PC-3 (cell line): ENCODE measurements at regions of chr14 and their contacts with region 1.

Region 1: DNA sequence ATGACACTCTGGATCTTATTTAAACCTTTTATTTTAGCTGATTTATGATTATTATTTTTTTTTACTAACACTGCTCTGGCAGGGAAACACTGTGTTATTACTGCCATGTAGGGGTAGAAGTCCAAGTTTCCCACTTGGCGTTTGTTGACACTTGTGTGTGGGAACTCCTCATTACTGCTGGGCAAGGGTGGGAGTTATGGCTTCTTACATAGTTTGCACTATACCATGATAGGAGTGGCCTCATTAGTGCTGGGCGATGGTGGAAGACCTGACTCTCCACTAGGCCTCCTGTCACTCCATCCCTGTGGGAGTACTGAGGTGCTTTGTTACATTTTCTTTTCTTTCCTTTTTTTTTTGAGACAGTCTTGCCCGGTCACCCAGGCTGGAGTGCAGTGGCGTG is 83.5 kb downstream of the BRMS1L start:
- DNase-seq: no peak
- ATAC-seq: no peak
- H3K4me3 ChIP-seq: no peak overlapping the region
- H3K27ac ChIP-seq: no peak overlapping the region
- H3K4me1 ChIP-seq: no peaks in the 10 kb centered on the region
- H3K27me3 ChIP-seq: peaks cover 46% of the 10 kb centered on the region
- CTCF ChIP-seq: no peak

Region 2: GRCh38 chr14:35959835-35960234 is 50.2 kb after region 1 on chr14:
- CTCF ChIA-PET with region 1: no interaction called
- POLR2A ChIA-PET with region 1: interaction called, 11 read pairs
- intact Hi-C with region 1: no loop called
- DNase-seq: peak; percentile 22
- ATAC-seq: no peak; the same call in 1 of the 2 replicates
- H3K4me3 ChIP-seq: no peak overlapping the region
- H3K27ac ChIP-seq: no peak overlapping the region
- H3K4me1 ChIP-seq: no peaks in the 10 kb centered on the region
- H3K27me3 ChIP-seq: peaks cover 38% of the 10 kb centered on the region
- CTCF ChIP-seq: peak; percentile 42; the same call in 1 of the 2 replicates

Region 3: GRCh38 chr14:35979531-35979930 is 69.9 kb after region 1 on chr14:
- CTCF ChIA-PET with region 1: no interaction called
- POLR2A ChIA-PET with region 1: no interaction called
- intact Hi-C with region 1: no loop called
- DNase-seq: no peak
- ATAC-seq: no peak
- H3K4me3 ChIP-seq: no peak overlapping the region
- H3K27ac ChIP-seq: no peak overlapping the region
- H3K4me1 ChIP-seq: no peaks in the 10 kb centered on the region
- H3K27me3 ChIP-seq: no peaks in the 10 kb centered on the region
- CTCF ChIP-seq: no peak